Gastrocnemius medialis (tissue), 4 donors: ENCODE measurements at regions of chr15 and their contacts with region 1.

Region 1: GRCh38 chr15:101277038-101277882 is at the start of gene SELENOS:
- DNase-seq: peak; percentile 88 to 89
- ATAC-seq: peak; percentile 83 to 85
- H3K4me3 ChIP-seq: peak within 1 kb of the TSS; percentile 77 to 88 (median 83)
- H3K27ac ChIP-seq: peak within 1 kb of the TSS; percentile 90 to 98 (median 94)
- H3K4me1 ChIP-seq: peaks cover 33 to 48% of the 10 kb centered on the region in 2 donors
- H3K27me3 ChIP-seq: no peaks in the 10 kb centered on the region
- CTCF ChIP-seq: peak in 1 of 5 experiments; percentile 11
- POLR2A ChIP-seq: peak; percentile 99 to 100
- total RNA-seq, gene SELENOS: 74.9 to 106 (median 89.1) TPM

Region 2: GRCh38 chr15:100602064-100602822 is 675.0 kb before region 1 on chr15 and contains the starts of genes ASB7 and LINS1:
- in situ Hi-C with region 1: loop called in 2 of 4 experiments (anchors 25 kb)
- intact Hi-C with region 1: loop called (anchors 1 kb)
- DNase-seq: peak; percentile 100
- ATAC-seq: peak; percentile 96 to 97
- H3K4me3 ChIP-seq: peak within 1 kb of the TSS; percentile 82 to 98 (median 96)
- H3K27ac ChIP-seq: peak within 1 kb of the TSS; percentile 85 to 94 (median 92)
- H3K4me1 ChIP-seq: peaks cover 32 to 44% of the 10 kb centered on the region in 2 donors
- H3K27me3 ChIP-seq: no peaks in the 10 kb centered on the region
- CTCF ChIP-seq: no peak
- POLR2A ChIP-seq: peak; percentile 35 to 49
- total RNA-seq, gene ASB7: 5.1 to 10.3 (median 6.3) TPM
- total RNA-seq, gene LINS1: 3.2 to 11.9 (median 10.3) TPM

Region 3: GRCh38 chr15:101242160-101242998 is 34.9 kb before region 1 on chr15:
- in situ Hi-C with region 1: no loop called
- intact Hi-C with region 1: no loop called
- DNase-seq: no peak
- ATAC-seq: peak in 1 of 2 donors; percentile 39
- H3K4me3 ChIP-seq: no peak overlapping the region
- H3K27ac ChIP-seq: peak overlapping the region in 1 of 4 donors; percentile 37
- H3K4me1 ChIP-seq: peaks cover 42 to 80% of the 10 kb centered on the region in 2 donors
- H3K27me3 ChIP-seq: no peaks in the 10 kb centered on the region
- CTCF ChIP-seq: no peak
- POLR2A ChIP-seq: no peak

Region 4: DNA sequence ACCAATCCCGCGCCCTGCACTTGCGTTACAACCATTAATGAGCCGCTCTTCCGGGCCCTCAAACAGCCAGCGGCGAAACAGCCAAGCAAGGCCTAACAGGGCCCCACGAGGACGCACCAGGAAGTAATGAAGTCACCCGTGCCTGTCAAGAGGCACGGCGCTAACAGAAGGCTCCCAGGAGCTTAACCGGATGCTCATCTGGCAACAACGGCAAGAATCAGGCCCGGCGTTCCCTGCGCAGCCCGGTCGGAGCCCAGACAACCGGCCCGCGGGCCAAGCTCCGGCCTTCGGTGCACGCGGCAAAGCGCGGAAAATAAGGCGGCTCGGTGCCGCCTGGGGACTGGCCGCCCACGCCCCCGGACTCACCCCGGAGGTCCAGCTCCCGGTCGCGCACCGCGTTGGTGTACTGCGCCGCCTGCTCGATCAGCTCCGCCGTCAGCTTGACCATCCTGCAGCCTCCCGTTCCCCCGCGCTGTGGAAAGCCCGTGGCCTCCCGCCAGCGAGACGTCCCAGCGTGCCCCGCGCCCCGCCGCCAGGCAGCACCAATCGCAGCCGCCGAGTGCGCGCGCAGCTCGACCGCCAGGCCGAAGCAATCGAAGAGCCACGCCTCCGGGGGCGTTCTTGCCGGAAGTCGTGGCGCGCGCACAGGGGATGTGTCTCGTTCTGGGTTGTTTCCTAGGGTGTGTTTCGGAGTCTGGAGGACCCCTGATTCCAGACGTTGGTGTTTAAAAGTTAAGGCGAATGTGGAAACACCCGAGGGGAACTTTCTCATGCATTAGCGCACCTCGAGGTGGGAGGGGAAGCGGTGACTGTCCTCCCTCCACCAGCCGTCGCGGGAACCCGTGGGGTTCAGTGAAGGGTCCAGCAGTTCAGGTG is 17.7 kb after region 1 on chr15 and contains the start of gene SNRPA1:
- in situ Hi-C with region 1: no loop called
- intact Hi-C with region 1: loop called (anchors 1 kb)
- DNase-seq: peak; percentile 96 to 97
- ATAC-seq: peak; percentile 90 to 93
- H3K4me3 ChIP-seq: peak within 1 kb of the TSS; percentile 71 to 99 (median 92)
- H3K27ac ChIP-seq: peak within 1 kb of the TSS; percentile 93 to 99 (median 98)
- H3K4me1 ChIP-seq: peaks cover 30 to 37% of the 10 kb centered on the region in 2 donors
- H3K27me3 ChIP-seq: no peaks in the 10 kb centered on the region
- CTCF ChIP-seq: peak in 2 of 5 experiments; percentile 5 to 22
- POLR2A ChIP-seq: peak; percentile 82 to 92
- total RNA-seq, gene SNRPA1: 19.6 to 59.1 (median 26.2) TPM

Region 5: GRCh38 chr15:101451266-101451799 is 174.1 kb after region 1 on chr15:
- in situ Hi-C with region 1: no loop called
- intact Hi-C with region 1: loop called (anchors 5 kb)
- DNase-seq: peak in 1 of 2 donors; percentile 48
- ATAC-seq: no peak
- H3K4me3 ChIP-seq: peak overlapping the region in 2 of 4 donors; percentile 12 to 19
- H3K27ac ChIP-seq: peak overlapping the region; percentile 7 to 94 (median 48)
- H3K4me1 ChIP-seq: peaks cover 42 to 50% of the 10 kb centered on the region in 2 donors
- H3K27me3 ChIP-seq: no peaks in the 10 kb centered on the region
- CTCF ChIP-seq: no peak
- POLR2A ChIP-seq: no peak